ENCODE measurements at regions of chr6 and their contacts with region 1.

Region 1: DNA sequence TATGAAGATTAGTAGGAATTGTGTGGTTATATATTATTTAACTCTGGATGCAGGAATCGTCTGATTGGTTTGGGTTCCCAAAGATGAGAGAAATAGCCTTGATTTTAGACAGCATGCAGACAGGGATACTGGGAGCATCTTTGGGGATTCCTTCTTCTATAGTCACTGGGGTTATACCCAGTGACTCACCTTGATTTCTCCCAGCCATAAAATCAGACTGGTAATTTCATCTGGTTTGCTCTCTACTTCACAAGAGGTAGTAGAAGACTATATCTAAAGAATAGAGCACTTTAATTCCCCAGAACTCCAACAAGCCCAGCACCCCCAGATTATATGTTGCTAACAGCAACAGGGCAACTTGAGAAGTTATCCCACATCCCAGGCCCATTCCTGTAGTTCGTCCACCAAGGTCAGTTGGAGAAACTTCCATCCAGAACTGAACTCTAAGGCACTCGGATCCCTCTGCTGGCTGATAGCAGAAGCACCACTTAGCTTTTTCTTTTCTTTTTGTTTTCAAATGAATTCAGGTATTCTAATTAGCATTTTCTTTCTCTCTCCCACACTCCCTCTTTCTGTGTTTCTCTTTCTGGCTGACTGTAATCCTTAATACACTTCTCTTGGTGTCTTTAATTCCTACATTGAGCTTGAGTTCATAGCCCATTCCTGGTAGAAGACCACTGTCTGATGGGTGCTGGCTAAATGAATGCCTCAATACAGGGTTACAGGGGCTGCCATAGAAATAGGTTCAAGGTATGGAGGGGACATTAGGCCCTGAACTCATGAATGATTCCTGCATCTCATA is 20.4 kb upstream of the EFHC1 start:
- DNase-seq: no peak
- ATAC-seq: peak; percentile 41

Region 2: DNA sequence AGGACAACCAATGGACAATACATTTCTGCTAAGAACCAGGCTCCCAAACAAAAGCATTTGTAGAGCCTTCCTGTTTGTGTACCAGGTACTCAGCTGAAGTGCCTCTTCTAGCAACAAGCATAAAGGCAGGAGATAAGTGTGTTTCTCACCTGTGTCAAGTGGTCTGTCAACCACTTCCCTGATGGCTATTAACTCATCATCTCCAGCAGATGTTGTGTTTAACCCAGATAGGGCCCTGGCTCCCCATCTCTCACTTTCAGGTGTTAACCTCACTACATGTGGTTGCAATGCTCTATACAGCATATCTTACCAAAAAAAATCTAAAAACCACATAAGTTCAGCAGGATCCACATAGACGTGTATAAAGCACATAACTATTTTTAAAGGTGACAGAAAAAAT is 223.2 kb before region 1 on chr6:
- intact Hi-C with region 1: no loop called
- DNase-seq: no peak
- ATAC-seq: no peak

Region 3: GRCh38 chr6:52284460-52285176 is 115.1 kb before region 1 on chr6 and contains the start of gene MCM3:
- intact Hi-C with region 1: loop called (anchors 5 kb)
- DNase-seq: peak; percentile 97
- ATAC-seq: peak; percentile 100
- total RNA-seq, gene MCM3: 21.8 TPM